Right cardiac atrium (tissue), 5 donors: ENCODE measurements at regions of chr11 and their contacts with region 1.

Region 1: DNA sequence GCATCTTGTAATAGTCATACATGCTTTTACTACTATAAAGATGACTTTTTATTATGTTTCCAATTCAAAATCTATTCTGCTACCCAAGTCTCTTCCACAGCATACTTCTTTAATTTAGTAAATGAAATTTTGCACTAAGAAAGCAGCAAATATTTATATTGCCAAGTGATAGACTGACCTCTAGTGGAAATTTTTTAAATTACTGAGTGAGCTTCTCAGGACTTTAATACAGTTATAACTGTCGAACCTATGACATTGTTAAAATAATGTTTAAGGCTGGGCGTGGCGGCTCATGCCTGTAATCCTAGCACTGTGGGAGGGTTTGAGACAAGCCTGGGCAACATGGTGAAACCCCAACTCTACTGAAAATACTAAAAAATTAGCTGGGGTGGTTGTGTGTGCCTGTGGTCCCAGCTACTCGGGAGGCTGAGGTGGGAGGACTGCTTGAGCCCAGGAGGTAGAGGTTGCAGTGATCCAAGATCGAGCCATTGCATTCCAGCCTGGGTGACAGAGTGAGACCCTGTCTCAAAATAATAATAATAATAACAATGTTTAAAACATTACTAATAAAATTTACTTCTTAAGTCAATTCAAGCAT is 27.3 kb downstream of the STK33 start:
- DNase-seq: peak in 1 of 3 donors; percentile 14
- ATAC-seq: peak in 1 of 2 donors; percentile 31
- H3K4me3 ChIP-seq: no peak overlapping the region
- H3K27ac ChIP-seq: no peak overlapping the region
- H3K4me1 ChIP-seq: no peaks in the 10 kb centered on the region
- H3K27me3 ChIP-seq: no peaks in the 10 kb centered on the region

Region 2: GRCh38 chr11:8192016-8192895 is 374.5 kb before region 1 on chr11:
- intact Hi-C with region 1: loop called in 1 of 4 experiments (anchors 10 kb)
- DNase-seq: peak; percentile 55 to 83 (median 73)
- ATAC-seq: peak; percentile 70 to 82
- H3K4me3 ChIP-seq: no peak overlapping the region
- H3K27ac ChIP-seq: no peak overlapping the region
- H3K4me1 ChIP-seq: no peaks in the 10 kb centered on the region
- H3K27me3 ChIP-seq: no peaks in the 10 kb centered on the region

Region 3: DNA sequence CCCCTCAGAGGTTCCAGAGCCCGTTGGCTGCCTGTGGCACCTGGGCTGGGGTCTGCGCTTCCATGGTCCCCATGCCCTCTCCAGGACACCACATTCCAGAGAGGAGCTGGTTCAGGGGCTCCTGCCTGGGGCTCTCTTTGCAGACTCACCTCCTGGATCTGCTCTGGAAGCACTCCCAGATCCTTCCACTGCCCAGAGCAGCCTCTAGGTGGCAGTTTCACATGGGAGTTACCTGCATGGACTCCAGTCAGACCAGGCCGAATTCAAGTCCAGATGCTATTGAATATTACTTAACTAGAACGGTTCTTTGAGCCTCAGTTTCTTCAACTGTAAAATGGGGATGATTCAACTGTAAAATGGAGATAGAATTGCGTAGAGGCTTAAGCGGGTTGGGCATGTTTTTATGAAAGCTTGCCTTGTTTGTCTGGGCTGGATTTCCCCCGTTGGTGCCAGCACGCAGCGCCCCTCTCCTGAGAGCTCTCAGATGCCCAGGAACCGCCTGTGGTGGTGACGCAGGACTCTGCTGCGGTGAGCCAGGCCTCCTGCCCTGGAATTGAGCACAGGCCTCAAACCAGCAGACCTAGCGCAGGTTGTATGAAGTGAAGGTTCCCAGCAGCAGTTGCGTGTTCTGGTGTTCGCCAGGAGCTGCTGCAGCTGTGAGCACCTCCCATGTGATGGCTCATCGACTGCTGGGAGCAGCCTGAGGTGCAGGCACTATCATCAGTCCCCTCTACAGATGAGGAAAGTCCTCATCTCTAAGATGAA is 347.3 kb before region 1 on chr11:
- intact Hi-C with region 1: loop called in 1 of 4 experiments (anchors 5 kb)
- DNase-seq: peak in 1 of 3 donors; percentile 33
- ATAC-seq: peak; percentile 59 to 63
- H3K4me3 ChIP-seq: no peak overlapping the region
- H3K27ac ChIP-seq: no peak overlapping the region
- H3K4me1 ChIP-seq: no peaks in the 10 kb centered on the region
- H3K27me3 ChIP-seq: no peaks in the 10 kb centered on the region

Region 4: GRCh38 chr11:8225589-8226036 is 341.1 kb before region 1 on chr11:
- intact Hi-C with region 1: loop called (anchors 5 kb)
- DNase-seq: peak; percentile 67 to 89 (median 87)
- ATAC-seq: peak; percentile 59 to 61
- H3K4me3 ChIP-seq: no peak overlapping the region
- H3K27ac ChIP-seq: no peak overlapping the region
- H3K4me1 ChIP-seq: no peaks in the 10 kb centered on the region
- H3K27me3 ChIP-seq: no peaks in the 10 kb centered on the region

Region 5: DNA sequence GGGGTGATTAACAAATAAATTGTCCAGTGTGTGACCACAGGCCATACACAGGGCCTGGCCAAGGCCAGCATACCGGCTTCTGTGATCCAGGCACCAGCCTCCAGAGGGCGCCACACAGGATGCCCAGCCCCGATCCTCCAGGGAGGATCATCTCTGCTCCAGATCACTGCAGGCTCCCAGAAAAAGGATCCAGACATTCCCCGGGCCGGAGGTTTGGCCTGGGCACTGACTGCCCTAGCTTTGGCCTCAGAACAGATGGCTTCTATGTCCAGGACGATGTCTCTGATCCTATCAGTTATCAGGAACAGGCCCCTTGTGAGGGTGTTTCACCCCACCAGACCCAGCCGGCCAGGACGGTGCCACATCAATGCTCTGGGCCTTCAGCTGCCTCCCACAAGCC is 228.6 kb before region 1 on chr11:
- intact Hi-C with region 1: loop called in 2 of 4 experiments (anchors 10 kb)
- DNase-seq: peak in 2 of 3 donors; percentile 72 to 73
- ATAC-seq: peak; percentile 39 to 49
- H3K4me3 ChIP-seq: no peak overlapping the region
- H3K27ac ChIP-seq: no peak overlapping the region
- H3K4me1 ChIP-seq: no peaks in the 10 kb centered on the region
- H3K27me3 ChIP-seq: no peaks in the 10 kb centered on the region

Region 6: DNA sequence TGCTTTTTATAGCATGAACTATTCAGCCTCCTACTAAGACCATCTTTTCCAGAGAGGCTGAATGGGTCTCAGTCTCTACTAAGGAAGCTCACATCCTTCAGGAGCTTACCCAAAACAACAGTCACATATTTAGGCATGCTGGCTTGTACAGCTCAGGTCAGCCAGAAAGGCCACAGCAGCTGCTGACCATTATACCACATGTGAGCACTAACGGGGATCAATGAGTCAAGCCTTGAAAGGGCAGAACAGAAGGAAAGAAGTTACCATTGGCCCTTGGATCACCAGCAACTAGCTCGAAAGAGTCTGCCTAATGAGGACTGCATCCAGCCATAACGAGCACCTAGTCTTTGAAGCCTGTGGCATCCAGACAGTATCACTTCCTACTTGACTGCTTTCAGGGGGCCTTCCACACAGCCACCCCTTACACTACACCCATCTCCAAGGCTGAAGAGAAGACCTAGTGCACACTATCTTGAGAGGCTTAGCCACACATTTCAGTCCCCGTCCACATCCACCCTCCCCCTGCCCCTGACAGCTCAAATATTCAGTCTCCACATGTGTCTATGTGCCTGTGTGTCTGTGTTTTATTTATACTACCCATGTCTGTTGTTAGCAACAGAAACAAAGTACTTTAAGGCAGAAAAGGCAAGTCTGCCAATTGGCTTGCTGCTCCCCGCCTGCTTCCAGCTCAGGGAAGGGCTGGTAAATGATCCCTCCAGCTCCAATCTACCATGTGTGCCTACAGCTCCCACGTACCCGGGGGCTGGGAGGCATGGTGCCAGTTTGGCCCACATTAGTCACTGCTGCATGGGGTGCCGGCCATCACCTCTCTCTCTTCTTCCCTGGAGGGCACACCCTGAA is 211.4 kb after region 1 on chr11:
- intact Hi-C with region 1: no loop called
- DNase-seq: peak; percentile 73 to 90 (median 88)
- ATAC-seq: peak; percentile 88 to 90
- H3K4me3 ChIP-seq: no peak overlapping the region
- H3K27ac ChIP-seq: peak overlapping the region; percentile 93
- H3K4me1 ChIP-seq: peaks cover 29% of the 10 kb centered on the region
- H3K27me3 ChIP-seq: no peaks in the 10 kb centered on the region